ENCODE measurements at regions of chr20 and their contacts with region 1.

Region 1: DNA sequence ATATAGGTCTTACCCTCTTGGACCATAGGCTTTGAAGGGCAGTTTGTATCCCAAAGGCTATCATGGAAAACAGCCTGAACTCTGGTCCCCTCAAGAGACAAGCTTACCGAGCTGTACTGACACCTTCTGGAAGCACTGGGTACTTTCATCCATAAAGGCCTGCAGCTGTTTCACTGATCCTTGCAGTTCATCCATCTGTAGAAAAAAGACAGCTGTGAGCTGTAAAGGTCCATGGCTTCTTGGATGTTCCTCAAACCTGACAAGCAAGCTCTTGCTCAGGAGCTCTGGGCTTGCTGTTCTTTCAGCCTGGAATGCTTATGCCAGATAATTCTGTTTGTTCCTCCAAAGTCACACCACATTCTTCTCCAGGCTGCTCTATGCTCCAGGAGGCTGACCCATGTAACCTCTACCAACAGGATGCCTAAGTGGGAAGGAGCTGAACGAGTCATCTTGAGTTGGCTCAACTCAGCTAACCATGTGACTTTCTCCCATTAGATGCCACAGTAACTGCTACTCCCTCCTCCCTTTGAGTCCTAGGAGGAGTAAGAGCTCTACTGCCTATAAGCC is 8.8 kb upstream of the NDRG3 start:
- DNase-seq: peak; percentile 63 to 69 (median 66)
- ATAC-seq: peak; percentile 98
- H3K4me3 ChIP-seq: no peak overlapping the region
- H3K27ac ChIP-seq: no peak overlapping the region
- H3K4me1 ChIP-seq: no peaks in the 10 kb centered on the region
- H3K27me3 ChIP-seq: no peaks in the 10 kb centered on the region
- CTCF ChIP-seq: peak; percentile 73 to 82 (median 75)
- EP300 ChIP-seq: no peak
- POLR2A ChIP-seq: no peak
- RAD21 ChIP-seq: peak; percentile 57 to 76

Region 2: GRCh38 chr20:36666181-36666740 is 88.5 kb before region 1 on chr20:
- CTCF ChIA-PET with region 1: interaction called, 16 read pairs
- POLR2A ChIA-PET with region 1: no interaction called
- in situ Hi-C with region 1: no loop called
- intact Hi-C with region 1: loop called (anchors 10 kb)
- DNase-seq: peak in 1 of 4 experiments; percentile 40
- ATAC-seq: peak; percentile 79
- H3K4me3 ChIP-seq: no peak overlapping the region
- H3K27ac ChIP-seq: no peak overlapping the region
- H3K4me1 ChIP-seq: no peaks in the 10 kb centered on the region
- H3K27me3 ChIP-seq: no peaks in the 10 kb centered on the region
- CTCF ChIP-seq: peak; percentile 15 to 61 (median 46); a peak in 3 of 6 replicates
- EP300 ChIP-seq: no peak
- POLR2A ChIP-seq: no peak
- RAD21 ChIP-seq: peak; percentile 42 to 71; a peak in 3 of 4 replicates

Region 3: GRCh38 chr20:36717657-36718056 is 37.1 kb before region 1 on chr20:
- CTCF ChIA-PET with region 1: interaction called, 7 read pairs
- POLR2A ChIA-PET with region 1: no interaction called
- in situ Hi-C with region 1: no loop called
- intact Hi-C with region 1: loop called (anchors 1 kb)
- DNase-seq: peak in 1 of 4 experiments; percentile 43
- ATAC-seq: peak; percentile 77
- H3K4me3 ChIP-seq: no peak overlapping the region
- H3K27ac ChIP-seq: no peak overlapping the region
- H3K4me1 ChIP-seq: no peaks in the 10 kb centered on the region
- H3K27me3 ChIP-seq: no peaks in the 10 kb centered on the region
- CTCF ChIP-seq: peak; percentile 49 to 63 (median 59); a peak in 5 of 6 replicates
- EP300 ChIP-seq: no peak
- POLR2A ChIP-seq: no peak
- RAD21 ChIP-seq: peak; percentile 50 to 73

Measured in K562 (cell line).